Activated naive CD4-positive, alpha-beta T cell treated with anti-CD3 and anti-CD28 coated beads for 36 hours (primary cell): ENCODE measurements at regions of chr19 and their contacts with region 1.

Region 1: DNA sequence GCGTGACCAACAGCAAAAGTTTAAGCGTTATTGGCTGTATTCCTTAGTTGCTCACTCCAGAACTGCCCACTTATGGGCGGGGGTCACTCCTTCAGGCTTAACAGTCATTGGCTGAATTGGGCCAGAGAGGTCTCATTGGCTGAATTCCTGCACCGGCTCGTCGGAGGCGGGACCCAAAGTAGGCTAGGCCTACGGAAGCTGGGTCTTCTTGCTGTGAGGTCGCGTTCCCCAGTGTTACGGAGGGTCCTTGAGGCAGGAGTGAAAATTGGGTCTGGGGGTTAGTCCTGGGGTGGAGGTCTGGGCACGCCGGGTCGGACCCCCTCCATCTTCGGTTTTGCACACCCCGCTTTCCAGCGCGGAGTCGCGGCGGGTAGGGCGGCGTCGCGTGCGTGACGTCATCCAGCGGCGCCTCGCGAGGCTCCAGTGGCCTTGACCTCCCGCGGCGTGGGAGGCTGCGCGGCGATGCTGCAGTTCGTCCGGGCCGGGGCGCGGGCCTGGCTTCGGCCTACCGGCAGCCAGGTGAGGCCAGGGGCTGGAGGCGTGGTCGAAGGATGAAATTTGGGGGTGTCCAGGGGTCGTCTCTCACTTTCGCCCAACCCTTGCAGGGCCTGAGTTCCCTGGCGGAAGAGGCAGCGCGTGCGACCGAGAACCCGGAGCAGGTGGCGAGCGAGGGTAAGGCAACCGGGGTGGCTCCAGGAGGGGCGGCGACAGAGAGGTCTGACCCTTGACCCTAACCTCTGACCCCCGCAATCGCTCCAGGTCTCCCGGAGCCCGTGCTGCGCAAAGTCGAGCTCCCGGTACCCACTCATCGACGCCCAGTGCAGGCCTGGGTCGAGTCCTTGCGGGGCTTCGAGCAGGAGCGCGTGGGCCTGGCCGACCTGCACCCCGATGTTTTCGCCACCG is at the start of gene MRPL4:
- DNase-seq: peak; percentile 98
- H3K4me3 Mint-ChIP-seq: peak within 1 kb of the TSS; percentile 97
- H3K27ac Mint-ChIP-seq: peak within 1 kb of the TSS; percentile 95
- H3K4me1 Mint-ChIP-seq: peaks cover 34% of the 10 kb centered on the region
- H3K27me3 Mint-ChIP-seq: no peaks in the 10 kb centered on the region
- total RNA-seq, gene MRPL4: 115 to 116 TPM

Region 2: DNA sequence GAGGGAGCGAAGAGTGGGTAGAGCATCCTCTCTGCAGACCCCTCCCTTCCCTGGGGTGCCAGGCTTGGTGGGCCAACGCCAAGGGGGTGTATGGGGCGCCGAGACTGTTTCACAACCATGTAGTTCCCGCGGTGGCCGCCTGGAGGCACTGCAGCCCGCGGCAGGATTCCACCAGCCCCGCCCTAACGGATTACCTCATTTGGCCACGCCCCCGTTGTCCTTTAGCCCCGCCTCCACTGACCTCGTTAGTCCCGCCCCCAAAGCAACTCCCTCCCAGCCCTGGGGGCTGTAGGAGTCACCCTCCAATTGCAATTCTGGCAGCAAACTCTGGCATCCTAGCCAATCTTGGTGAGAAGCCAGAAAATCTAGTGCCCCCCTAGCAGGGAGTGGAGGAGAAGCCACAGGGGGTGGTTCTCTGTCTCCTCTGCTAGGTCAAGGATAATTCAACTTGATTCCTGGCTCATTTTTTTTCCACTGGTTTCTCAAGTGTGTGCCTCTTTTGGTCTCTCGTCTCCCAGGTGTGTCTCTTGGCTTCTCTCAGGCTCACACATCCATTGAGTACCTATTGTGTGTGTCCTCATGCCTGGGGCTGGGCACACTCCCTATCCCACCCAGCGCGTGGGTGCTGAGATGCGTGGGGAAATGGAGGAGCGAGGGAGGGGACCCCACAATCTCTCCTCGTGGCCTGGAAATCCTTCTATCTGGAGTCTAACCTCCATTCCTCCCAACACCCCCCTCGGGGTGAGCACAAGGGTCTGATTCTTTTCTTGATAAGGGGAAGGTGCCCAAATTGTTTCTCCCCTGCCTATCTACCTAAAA is 317.7 kb before region 1 on chr19:
- CTCF ChIA-PET with region 1: interaction called, 5 read pairs
- intact Hi-C with region 1: loop called (anchors 1 kb)
- DNase-seq: peak; percentile 91
- H3K4me3 Mint-ChIP-seq: no peak overlapping the region
- H3K27ac Mint-ChIP-seq: no peak overlapping the region
- H3K4me1 Mint-ChIP-seq: peaks cover 28% of the 10 kb centered on the region
- H3K27me3 Mint-ChIP-seq: peaks cover 56% of the 10 kb centered on the region

Region 3: DNA sequence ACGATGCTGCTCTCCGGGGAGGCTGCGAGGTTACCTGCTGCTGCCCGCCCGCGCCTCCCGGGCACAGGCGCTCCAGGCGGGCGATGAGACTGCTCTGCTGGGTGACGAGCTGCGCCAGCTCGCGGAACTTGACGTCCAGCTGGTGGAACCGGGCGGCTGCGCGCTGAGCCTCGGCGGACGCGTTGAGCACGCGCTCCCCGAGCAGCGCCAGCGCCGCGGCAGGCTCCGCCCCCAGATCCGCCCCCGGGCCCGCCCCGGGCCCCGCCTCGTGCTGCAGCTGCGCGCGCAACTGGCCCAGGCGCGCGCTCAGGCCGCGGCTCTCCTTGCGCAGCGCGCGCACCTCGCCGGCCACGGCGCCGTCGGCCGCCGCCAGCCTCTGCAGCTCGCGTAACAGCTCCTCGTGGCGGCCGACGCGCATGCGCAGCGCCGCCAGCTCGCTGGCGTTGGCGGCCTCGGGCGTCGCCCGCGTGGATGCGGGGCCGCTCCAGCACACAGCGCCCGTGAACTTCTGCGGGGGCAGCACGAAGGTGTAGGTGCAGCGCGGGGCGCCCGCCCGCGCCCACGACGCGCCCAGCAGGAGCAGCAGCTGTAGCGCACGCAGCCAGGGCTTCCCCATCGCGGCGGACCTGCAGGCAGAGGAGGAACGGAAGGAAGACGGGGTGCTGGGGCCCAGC is 156.0 kb before region 1 on chr19:
- CTCF ChIA-PET with region 1: interaction called, 3 read pairs
- intact Hi-C with region 1: loop called (anchors 1 kb)
- DNase-seq: peak; percentile 80
- H3K4me3 Mint-ChIP-seq: peak overlapping the region; percentile 58
- H3K27ac Mint-ChIP-seq: no peak overlapping the region
- H3K4me1 Mint-ChIP-seq: peaks cover 23% of the 10 kb centered on the region
- H3K27me3 Mint-ChIP-seq: no peaks in the 10 kb centered on the region

Region 4: DNA sequence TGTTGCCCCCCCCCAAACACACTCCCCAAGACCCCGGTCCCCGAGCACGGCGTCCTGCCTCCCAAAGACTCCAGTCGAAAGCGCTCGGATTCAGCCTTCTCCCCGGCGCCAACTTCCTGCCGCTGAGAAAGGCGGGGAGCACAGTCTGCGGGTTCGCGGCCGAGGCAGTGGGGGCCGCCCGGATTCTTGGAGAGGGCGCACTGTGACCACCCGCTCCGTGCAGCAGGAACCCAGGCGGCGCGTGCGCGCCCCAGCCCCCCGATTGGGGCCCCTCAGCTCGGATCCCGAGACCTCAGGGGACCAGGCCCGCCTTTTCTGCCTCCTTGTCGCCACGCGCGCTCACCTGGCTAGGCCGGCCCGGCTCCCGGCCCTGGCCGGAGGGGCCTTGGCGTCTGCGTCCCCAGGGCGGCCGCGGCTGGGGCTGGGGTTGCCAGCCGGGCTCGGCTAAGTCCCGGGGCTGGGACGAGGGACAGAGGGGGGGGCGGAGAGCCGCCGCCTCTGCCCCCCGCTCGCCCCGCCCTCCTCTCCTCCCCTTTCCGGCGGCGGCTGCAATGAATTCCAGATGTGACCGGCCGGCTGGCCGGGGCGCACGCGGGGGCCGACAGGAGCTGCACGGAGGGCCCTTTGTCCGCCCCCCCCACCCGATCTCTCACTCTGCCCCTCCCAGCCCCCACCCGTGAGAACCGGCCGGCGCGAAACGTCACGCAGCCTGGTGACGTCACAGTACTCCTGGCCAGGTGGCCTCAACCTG is 21.0 kb before region 1 on chr19 and contains the start of gene S1PR2:
- CTCF ChIA-PET with region 1: interaction called, 58 read pairs
- intact Hi-C with region 1: loop called (anchors 1 kb)
- DNase-seq: peak; percentile 66
- H3K4me3 Mint-ChIP-seq: peak within 1 kb of the TSS; percentile 84
- H3K27ac Mint-ChIP-seq: peak within 1 kb of the TSS; percentile 72
- H3K4me1 Mint-ChIP-seq: peaks cover 24% of the 10 kb centered on the region
- H3K27me3 Mint-ChIP-seq: no peaks in the 10 kb centered on the region
- total RNA-seq, gene S1PR2: 3.4 TPM

Region 5: DNA sequence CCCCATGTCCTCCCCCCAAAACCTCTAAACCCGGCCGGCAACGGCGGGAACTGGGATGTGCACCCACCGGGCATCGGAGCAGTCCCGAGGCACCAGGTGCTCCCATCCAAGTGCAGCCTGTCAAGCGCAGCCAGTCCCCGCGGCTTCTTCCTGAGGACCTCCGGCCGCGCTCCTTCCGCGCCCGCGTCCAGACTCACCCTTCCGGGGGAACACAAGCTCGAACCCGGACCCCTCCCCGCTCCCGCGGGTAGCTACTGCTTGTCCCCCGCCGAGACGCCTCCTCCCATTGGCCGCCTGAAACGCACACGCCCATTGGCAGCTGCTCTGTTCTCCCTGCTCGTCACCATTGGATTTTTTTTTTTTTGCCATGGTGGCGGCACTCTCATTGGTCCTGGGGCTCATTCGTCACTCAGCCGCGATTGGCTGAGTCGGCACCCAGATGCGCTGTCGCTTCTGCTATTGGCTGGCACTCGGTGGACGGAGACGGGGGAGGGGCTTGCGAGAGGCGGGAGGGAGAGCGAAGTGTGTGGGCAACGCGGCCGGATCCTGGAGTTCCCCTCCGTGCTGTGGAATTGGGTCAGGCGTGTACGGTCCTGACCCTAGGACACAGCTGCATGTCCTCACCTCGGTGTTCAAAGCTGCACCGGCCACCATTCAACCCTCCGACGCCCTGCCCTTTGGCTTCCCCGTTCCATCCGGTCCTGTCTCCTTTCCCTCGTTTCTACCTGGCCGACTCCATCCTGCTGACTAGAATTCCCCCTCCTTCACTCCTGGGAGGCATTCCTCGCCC is 128.5 kb after region 1 on chr19 and contains the start of gene TYK2:
- CTCF ChIA-PET with region 1: interaction called, 70 read pairs
- intact Hi-C with region 1: loop called (anchors 1 kb)
- DNase-seq: peak; percentile 97
- H3K4me3 Mint-ChIP-seq: peak within 1 kb of the TSS; percentile 87
- H3K27ac Mint-ChIP-seq: peak within 1 kb of the TSS; percentile 91
- H3K4me1 Mint-ChIP-seq: peaks cover 19% of the 10 kb centered on the region
- H3K27me3 Mint-ChIP-seq: no peaks in the 10 kb centered on the region
- total RNA-seq, gene TYK2: 175 to 190 TPM